CD8-positive, alpha-beta T cell (primary cell): ENCODE measurements at regions of chr7 and their contacts with region 1.

Region 1: DNA sequence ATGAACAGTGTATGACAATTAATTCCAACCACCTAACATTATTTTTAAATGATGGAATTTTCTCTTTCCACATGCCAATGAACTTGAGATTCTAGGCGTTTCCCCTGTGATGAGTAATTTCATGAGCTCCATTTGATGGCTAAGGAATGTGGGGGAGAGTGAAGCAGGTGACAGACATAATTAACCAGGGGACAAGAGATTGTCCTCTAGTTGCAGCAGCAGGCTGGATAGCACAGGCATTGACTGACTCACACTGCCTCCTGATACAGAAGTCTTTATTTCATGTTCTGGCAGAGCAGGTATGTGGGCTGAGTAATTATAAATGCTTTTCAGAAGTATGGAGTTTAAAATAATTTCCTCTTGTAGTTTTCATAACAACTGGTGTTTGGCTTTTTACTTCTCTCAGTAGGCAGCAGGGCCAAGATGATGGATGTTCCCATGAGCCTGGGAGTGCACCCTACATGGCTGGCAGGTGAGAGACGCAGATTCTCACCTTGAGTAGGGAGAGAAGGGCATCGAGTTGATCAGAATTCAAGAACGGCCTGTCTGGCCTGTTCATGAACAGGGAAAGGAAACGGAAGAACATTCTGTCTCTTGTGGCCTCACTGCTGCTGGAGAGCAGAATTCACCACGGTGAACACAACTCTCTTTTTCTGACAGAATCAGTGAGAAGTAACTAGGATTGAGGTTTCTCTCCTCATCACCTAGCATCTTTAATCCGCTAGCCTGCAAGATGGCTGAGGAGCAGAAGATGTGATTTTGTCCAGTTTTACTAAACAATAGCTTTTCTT is 118.8 kb downstream of the AOAH start:
- DNase-seq: no peak
- ATAC-seq: no peak
- H3K4me3 ChIP-seq: no peak overlapping the region
- H3K4me3 Mint-ChIP-seq: peak overlapping the region; percentile 30
- H3K27ac ChIP-seq: no peak overlapping the region
- H3K27ac Mint-ChIP-seq: peak overlapping the region; percentile 91
- H3K4me1 ChIP-seq: peaks cover 44% of the 10 kb centered on the region
- H3K4me1 Mint-ChIP-seq: peaks cover 77% of the 10 kb centered on the region
- H3K27me3 ChIP-seq: no peaks in the 10 kb centered on the region
- H3K27me3 Mint-ChIP-seq: no peaks in the 10 kb centered on the region
- CTCF ChIP-seq: no peak

Region 2: DNA sequence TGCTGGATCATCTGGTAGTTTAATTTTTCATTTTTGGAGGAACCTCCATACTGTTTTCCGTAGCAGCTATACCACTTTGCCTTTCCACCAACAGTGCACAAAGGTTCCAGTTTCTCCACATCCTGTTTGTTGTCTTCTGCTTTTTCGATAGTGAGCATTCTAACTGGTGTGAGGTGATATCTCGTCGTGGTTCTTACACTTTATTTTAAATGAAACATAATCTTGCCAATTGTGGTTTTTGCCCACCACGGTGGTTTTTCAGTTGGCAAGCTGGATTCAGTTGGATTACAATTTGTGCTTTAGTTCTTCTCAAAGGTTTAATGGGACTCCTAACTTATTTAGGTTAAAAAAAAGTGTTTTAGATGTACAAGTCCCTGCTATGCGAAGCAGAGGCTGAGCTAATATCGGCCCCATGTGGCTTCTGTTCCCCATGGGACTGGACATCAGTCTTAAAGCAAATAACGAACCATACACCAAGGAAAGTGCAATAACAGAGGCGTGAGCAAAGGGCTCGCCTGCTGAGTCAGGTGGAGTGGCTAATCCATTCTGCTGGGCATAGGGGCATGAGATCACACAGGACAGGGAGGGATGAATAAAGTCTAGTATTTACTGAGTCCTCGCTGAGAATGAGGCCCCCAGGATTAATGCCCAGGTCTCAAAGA is 34.8 kb before region 1 on chr7:
- CTCF ChIA-PET with region 1: no interaction called
- POLR2A ChIA-PET with region 1: no interaction called
- intact Hi-C with region 1: loop called in 1 of 2 experiments (anchors 5 kb)
- DNase-seq: peak in 2 of 9 experiments; percentile 2 to 36
- ATAC-seq: no peak
- H3K4me3 ChIP-seq: no peak overlapping the region
- H3K4me3 Mint-ChIP-seq: no peak overlapping the region
- H3K27ac ChIP-seq: peak overlapping the region in 1 of 2 experiments; percentile 22
- H3K27ac Mint-ChIP-seq: peak overlapping the region; percentile 58
- H3K4me1 ChIP-seq: peaks cover 8% of the 10 kb centered on the region
- H3K4me1 Mint-ChIP-seq: peaks cover 22% of the 10 kb centered on the region
- H3K27me3 ChIP-seq: no peaks in the 10 kb centered on the region
- H3K27me3 Mint-ChIP-seq: no peaks in the 10 kb centered on the region
- CTCF ChIP-seq: no peak

Region 3: GRCh38 chr7:36659172-36659516 is 53.7 kb after region 1 on chr7:
- CTCF ChIA-PET with region 1: no interaction called
- POLR2A ChIA-PET with region 1: no interaction called
- intact Hi-C with region 1: loop called in 1 of 2 experiments (anchors 5 kb)
- DNase-seq: no peak
- ATAC-seq: no peak
- H3K4me3 ChIP-seq: no peak overlapping the region
- H3K4me3 Mint-ChIP-seq: no peak overlapping the region
- H3K27ac ChIP-seq: peak overlapping the region in 1 of 2 experiments; percentile 52
- H3K27ac Mint-ChIP-seq: peak overlapping the region; percentile 42
- H3K4me1 ChIP-seq: peaks cover 7% of the 10 kb centered on the region
- H3K4me1 Mint-ChIP-seq: peaks cover 69% of the 10 kb centered on the region
- H3K27me3 ChIP-seq: no peaks in the 10 kb centered on the region
- H3K27me3 Mint-ChIP-seq: no peaks in the 10 kb centered on the region
- CTCF ChIP-seq: no peak